ENCODE measurements at regions of chr20 and their contacts with region 1.

Region 1: GRCh38 chr20:50379049-50379990 is 130.9 kb upstream of the PTPN1 start:
- DNase-seq: no peak
- ATAC-seq: no peak
- H3K4me3 ChIP-seq: no peak overlapping the region
- H3K27ac ChIP-seq: peak overlapping the region; percentile 78 to 87
- H3K4me1 ChIP-seq: peaks cover 78% of the 10 kb centered on the region
- CTCF ChIP-seq: no peak
- EP300 ChIP-seq: no peak
- POLR2A ChIP-seq: no peak
- RAD21 ChIP-seq: no peak

Region 2: GRCh38 chr20:50320910-50321796 is 58.2 kb before region 1 on chr20:
- CTCF ChIA-PET with region 1: interaction called, 10 read pairs
- POLR2A ChIA-PET with region 1: no interaction called
- DNase-seq: peak; percentile 89 to 98
- ATAC-seq: peak; percentile 99
- H3K4me3 ChIP-seq: peak overlapping the region; percentile 76
- H3K27ac ChIP-seq: peak overlapping the region; percentile 94 to 99
- H3K4me1 ChIP-seq: peaks cover 31% of the 10 kb centered on the region
- CTCF ChIP-seq: no peak
- EP300 ChIP-seq: peak in 1 of 2 experiments; percentile 31; a peak in 1 of 5 replicates
- POLR2A ChIP-seq: peak; percentile 64
- RAD21 ChIP-seq: peak; percentile 1 to 39; a peak in 1 of 5 replicates

Region 3: GRCh38 chr20:50395258-50395729 is 16.0 kb after region 1 on chr20:
- CTCF ChIA-PET with region 1: interaction called, 10 read pairs
- POLR2A ChIA-PET with region 1: interaction called, 5 read pairs
- DNase-seq: no peak
- ATAC-seq: peak in 1 of 2 experiments; percentile 20; a peak in 1 of 6 replicates
- H3K4me3 ChIP-seq: no peak overlapping the region
- H3K27ac ChIP-seq: peak overlapping the region; percentile 67 to 81; a peak in 5 of 6 replicates
- H3K4me1 ChIP-seq: peaks cover 57% of the 10 kb centered on the region
- CTCF ChIP-seq: no peak
- EP300 ChIP-seq: no peak
- POLR2A ChIP-seq: no peak
- RAD21 ChIP-seq: no peak